Aorta (tissue), 5 donors: ENCODE measurements at regions of chr5 and their contacts with region 1.

Region 1: GRCh38 chr5:149406203-149406978 is 27.3 kb upstream of the IL17B start:
- DNase-seq: peak; percentile 94 to 95
- ATAC-seq: peak; percentile 86
- H3K4me3 ChIP-seq: peak overlapping the region; percentile 89 to 97
- H3K27ac ChIP-seq: peak overlapping the region; percentile 95 to 98
- H3K4me1 ChIP-seq: peaks cover 0 to 2% of the 10 kb centered on the region in 2 donors
- H3K27me3 ChIP-seq: no peaks in the 10 kb centered on the region

Region 2: GRCh38 chr5:149348518-149348917 is 57.9 kb before region 1 on chr5:
- intact Hi-C with region 1: no loop called
- DNase-seq: no peak
- ATAC-seq: no peak
- H3K4me3 ChIP-seq: no peak overlapping the region
- H3K27ac ChIP-seq: no peak overlapping the region
- H3K4me1 ChIP-seq: no peaks in the 10 kb centered on the region
- H3K27me3 ChIP-seq: no peaks in the 10 kb centered on the region

Region 3: DNA sequence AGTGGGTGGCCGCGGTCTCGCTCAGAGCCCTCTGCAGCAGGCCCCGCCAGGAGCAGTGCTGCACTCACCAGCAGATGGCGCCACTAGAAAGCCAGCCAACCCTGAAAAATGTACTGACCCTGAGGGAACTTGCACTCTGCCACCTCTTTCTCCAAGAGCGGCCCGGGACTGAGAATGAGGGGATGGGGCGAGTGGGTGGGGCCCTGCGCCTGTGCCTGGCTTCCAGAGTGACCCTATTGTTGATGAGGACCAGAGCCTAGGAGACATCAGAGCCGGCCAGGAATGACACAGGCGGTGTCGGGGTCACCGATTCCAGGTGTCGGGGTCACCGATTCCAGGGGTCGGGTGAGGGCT is 24.4 kb before region 1 on chr5:
- intact Hi-C with region 1: loop called (anchors 1 to 2 kb)
- DNase-seq: peak; percentile 90 to 95
- ATAC-seq: peak; percentile 84
- H3K4me3 ChIP-seq: no peak overlapping the region
- H3K27ac ChIP-seq: peak overlapping the region; percentile 99 to 100
- H3K4me1 ChIP-seq: peaks cover 0 to 1% of the 10 kb centered on the region in 2 donors
- H3K27me3 ChIP-seq: no peaks in the 10 kb centered on the region

Region 4: GRCh38 chr5:149387982-149388381 is 18.4 kb before region 1 on chr5:
- intact Hi-C with region 1: loop called (anchors 1 to 2 kb)
- DNase-seq: peak in 1 of 2 donors; percentile 9
- ATAC-seq: peak; percentile 26
- H3K4me3 ChIP-seq: no peak overlapping the region
- H3K27ac ChIP-seq: peak overlapping the region; percentile 31 to 72
- H3K4me1 ChIP-seq: peaks cover 0 to 1% of the 10 kb centered on the region in 2 donors
- H3K27me3 ChIP-seq: no peaks in the 10 kb centered on the region

Region 5: GRCh38 chr5:149423794-149424268 is 17.4 kb after region 1 on chr5:
- intact Hi-C with region 1: loop called in 1 of 2 experiments (anchors 2 kb)
- DNase-seq: no peak
- ATAC-seq: no peak
- H3K4me3 ChIP-seq: no peak overlapping the region
- H3K27ac ChIP-seq: peak overlapping the region in 1 of 2 donors; percentile 64
- H3K4me1 ChIP-seq: no peaks in the 10 kb centered on the region
- H3K27me3 ChIP-seq: no peaks in the 10 kb centered on the region

Region 6: GRCh38 chr5:149895416-149896345 is 489.3 kb after region 1 on chr5:
- intact Hi-C with region 1: no loop called
- DNase-seq: no peak
- ATAC-seq: no peak
- H3K4me3 ChIP-seq: no peak overlapping the region
- H3K27ac ChIP-seq: no peak overlapping the region
- H3K4me1 ChIP-seq: no peaks in the 10 kb centered on the region
- H3K27me3 ChIP-seq: no peaks in the 10 kb centered on the region